ENCODE measurements at regions of chr4 and their contacts with region 1.

Region 1: DNA sequence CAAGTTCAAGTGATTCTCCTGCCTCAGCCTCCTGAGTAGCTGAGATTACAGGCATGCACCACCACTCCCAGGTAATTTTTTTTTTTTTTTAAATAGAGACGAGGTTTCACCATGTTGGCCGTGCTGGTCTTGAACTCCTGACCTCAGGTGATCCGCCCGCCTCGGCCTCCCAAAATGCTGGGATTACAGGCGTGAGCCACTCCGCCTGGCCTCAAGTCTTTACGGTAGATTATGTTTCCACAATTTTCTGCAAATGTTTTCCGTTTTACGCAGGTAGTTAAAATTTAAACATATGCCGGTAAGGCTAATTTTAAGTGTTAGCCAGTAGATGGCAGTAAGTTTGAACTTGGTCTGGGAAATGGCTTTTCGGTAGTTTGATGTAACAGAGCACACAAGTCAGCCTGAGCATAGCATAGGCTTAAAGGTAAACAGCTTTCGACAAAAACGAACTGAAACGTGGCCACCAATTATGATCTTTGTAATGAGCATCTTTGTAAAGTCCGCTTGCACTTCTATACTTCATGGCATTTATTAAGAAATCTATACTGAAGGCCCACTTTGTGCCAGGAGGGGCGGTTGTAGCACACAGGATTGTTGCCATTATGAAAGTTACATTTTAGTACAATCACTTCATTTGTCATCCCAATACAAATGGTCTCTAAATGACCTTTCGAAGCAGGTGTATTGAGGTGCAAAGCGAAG is 31.1 kb downstream of the CCKAR start:
- DNase-seq: no peak
- ATAC-seq: peak; percentile 84
- H3K4me3 Mint-ChIP-seq: peak overlapping the region; percentile 4
- H3K27ac Mint-ChIP-seq: no peak overlapping the region
- H3K4me1 Mint-ChIP-seq: peaks cover 19% of the 10 kb centered on the region
- H3K27me3 Mint-ChIP-seq: no peaks in the 10 kb centered on the region

Region 2: DNA sequence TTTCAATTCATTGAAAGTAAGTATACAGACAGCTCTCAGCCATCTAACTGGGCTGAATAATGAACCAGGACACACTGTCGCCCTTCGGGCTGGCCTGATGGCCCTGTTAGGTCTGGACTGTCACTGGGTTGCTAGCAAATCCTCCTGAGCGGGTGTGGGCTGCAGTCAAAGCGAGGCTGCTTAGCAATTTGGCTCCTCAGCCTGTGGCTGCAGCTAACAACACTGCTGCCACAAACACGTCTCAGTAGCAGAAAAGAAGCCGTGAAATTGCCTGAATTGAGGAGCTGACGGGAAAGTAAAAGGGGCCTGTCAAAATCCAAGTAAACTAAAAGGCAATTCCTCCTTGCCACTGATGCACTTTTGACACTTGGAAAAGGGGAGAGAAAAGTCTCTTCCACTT is 472.4 kb before region 1 on chr4:
- CTCF ChIA-PET with region 1: interaction called, 12 read pairs
- POLR2A ChIA-PET with region 1: no interaction called
- intact Hi-C with region 1: no loop called
- DNase-seq: no peak
- ATAC-seq: no peak
- H3K4me3 Mint-ChIP-seq: no peak overlapping the region
- H3K27ac Mint-ChIP-seq: no peak overlapping the region
- H3K4me1 Mint-ChIP-seq: peaks cover 4% of the 10 kb centered on the region
- H3K27me3 Mint-ChIP-seq: no peaks in the 10 kb centered on the region

Region 3: DNA sequence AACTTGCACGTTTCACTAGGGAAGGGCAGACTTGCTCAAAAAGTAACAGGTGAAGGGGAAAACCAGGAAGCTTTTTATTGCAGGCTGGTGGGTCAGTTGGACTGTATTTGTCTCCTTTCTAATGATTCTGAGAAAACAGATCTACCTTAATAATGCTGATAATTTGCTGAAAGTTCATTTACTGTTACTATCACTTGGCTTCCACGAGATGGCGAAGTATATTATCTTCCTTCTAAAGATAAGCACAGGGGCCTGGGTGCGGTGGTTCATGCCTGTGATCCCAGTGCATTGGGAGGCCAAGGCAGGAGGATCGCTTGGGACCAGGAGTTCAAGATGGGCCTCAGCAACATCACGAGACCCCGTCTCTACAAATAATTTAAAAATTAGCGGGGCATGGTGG is 14.7 kb after region 1 on chr4:
- CTCF ChIA-PET with region 1: no interaction called
- POLR2A ChIA-PET with region 1: no interaction called
- intact Hi-C with region 1: no loop called
- DNase-seq: no peak
- ATAC-seq: no peak
- H3K4me3 Mint-ChIP-seq: no peak overlapping the region
- H3K27ac Mint-ChIP-seq: no peak overlapping the region
- H3K4me1 Mint-ChIP-seq: no peaks in the 10 kb centered on the region
- H3K27me3 Mint-ChIP-seq: peaks cover 3% of the 10 kb centered on the region

Region 4: DNA sequence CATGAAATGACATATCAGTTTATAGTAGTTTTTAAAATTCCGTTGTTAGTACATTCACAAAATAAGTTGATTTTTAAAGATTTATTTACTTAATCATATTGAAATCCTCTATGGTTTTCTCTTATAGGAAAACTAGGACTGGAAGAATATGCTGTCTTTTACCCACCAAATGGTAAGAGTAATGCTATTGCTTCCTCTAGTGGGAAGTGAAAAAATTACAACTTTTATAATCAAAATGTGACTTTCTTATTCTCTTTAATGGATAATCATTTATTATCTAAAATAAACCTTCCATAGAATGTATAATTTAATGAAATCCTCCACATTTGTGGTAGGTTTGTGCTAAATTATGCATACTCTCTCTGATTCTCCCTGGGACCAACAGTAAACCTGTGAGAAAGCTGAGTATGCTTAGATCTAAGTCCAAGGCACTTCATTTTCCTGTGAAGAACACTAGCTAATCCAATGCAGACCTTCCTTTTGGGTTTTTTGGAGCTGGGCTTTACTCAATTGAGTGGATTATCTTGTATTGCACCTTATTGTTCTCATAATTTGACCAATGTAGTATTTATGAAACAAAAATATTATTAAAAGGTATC is 260.8 kb after region 1 on chr4:
- CTCF ChIA-PET with region 1: interaction called, 4 read pairs
- POLR2A ChIA-PET with region 1: no interaction called
- intact Hi-C with region 1: loop called (anchors 1 to 2 kb)
- DNase-seq: no peak
- ATAC-seq: no peak
- H3K4me3 Mint-ChIP-seq: no peak overlapping the region
- H3K27ac Mint-ChIP-seq: no peak overlapping the region
- H3K4me1 Mint-ChIP-seq: peaks cover 4% of the 10 kb centered on the region
- H3K27me3 Mint-ChIP-seq: no peaks in the 10 kb centered on the region

Region 5: GRCh38 chr4:26916195-26916594 is 457.0 kb after region 1 on chr4:
- CTCF ChIA-PET with region 1: no interaction called
- POLR2A ChIA-PET with region 1: no interaction called
- intact Hi-C with region 1: no loop called
- DNase-seq: no peak
- ATAC-seq: no peak
- H3K4me3 Mint-ChIP-seq: no peak overlapping the region
- H3K27ac Mint-ChIP-seq: peak overlapping the region; percentile 53
- H3K4me1 Mint-ChIP-seq: peaks cover 48% of the 10 kb centered on the region
- H3K27me3 Mint-ChIP-seq: no peaks in the 10 kb centered on the region

Measured in activated CD4-positive, alpha-beta T cell treated with anti-CD3 and anti-CD28 coated beads for 36 hours (primary cell).